Heart right ventricle (tissue), 16 donors: ENCODE measurements at regions of chr20 and their contacts with region 1.

Region 1: GRCh38 chr20:36439040-36439730 is 102.1 kb upstream of the MYL9 start:
- DNase-seq: peak; percentile 56 to 64
- ATAC-seq: peak in 7 of 8 donors; percentile 42 to 76 (median 62)
- H3K4me3 ChIP-seq: no peak overlapping the region
- H3K27ac ChIP-seq: no peak overlapping the region
- H3K4me1 ChIP-seq: peaks cover 0 to 14% (median 3%) of the 10 kb centered on the region in 9 donors
- H3K27me3 ChIP-seq: peaks cover 0 to 28% (median 21%) of the 10 kb centered on the region in 7 donors
- CTCF ChIP-seq: peak; percentile 57 to 91 (median 84)

Region 2: DNA sequence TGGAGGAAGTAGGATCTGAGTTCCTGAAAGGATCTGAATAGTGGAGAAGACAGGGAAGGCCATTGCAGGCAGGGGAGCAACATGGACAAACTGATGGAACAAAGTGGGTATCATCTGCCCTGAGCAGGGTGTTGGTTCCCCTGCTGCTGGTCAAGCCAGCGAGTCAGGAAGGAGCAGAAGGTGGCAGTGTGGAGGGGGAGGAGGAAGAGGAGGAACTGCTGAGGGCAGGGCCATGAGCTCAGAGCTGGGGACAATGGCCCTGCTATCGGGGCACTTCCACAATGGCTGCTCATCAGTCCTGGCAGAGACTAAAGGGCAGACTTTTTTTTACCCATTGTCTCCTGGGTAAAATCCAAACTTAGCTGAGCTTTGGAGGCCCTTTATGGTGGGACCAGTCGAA is 457.2 kb before region 1 on chr20:
- intact Hi-C with region 1: loop called in 1 of 10 experiments (anchors 10 kb)
- DNase-seq: no peak
- ATAC-seq: no peak
- H3K4me3 ChIP-seq: no peak overlapping the region
- H3K27ac ChIP-seq: no peak overlapping the region
- H3K4me1 ChIP-seq: peaks cover 0 to 13% (median 0%) of the 10 kb centered on the region in 9 donors
- H3K27me3 ChIP-seq: no peaks in the 10 kb centered on the region
- CTCF ChIP-seq: no peak

Region 3: DNA sequence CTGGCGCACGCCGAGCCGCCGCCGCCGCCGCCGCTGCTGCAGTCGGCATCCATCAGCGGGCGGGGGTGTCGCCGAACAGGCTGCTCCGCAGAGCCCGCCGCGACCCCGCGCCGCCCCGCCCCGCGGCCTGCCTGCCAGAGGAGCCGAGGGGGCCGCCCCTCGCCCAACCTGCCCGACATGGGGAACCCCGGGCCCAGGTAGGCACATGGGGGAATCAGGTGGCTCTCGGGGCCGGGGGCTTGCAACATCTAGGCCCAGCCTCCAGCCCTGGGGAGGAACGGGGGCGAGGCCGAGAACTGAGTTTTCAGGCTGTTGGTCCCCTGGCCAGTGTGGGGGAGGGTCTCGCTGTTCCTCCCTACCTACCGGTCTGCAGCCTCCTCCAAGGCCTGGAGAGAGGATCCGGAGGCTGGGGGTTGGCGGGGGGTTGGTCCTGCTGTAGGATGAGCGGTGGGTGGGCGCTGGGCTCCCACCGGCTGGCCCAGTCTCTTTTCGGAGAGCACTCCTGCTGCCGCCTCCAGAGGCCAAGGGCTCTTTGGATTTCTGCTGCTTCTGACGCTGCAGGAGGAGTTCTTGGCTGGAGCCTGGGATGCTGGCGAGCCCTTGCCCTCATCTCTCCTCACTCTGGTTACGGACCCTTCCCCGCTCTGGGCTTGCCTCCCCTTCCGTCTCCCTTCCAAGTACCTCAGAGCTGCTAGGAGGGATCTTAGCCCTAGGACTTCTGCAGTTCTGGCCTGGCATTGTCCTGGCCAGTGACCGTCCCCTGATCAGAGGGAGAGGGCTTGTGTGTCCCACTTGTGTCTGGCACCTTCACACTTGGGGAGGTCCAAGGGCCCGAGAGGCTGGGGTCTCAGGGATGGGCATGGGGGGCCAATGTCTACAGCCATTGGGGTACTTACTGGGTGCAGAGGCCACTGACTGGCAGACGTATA is 284.2 kb before region 1 on chr20 and contains the start of gene EPB41L1:
- intact Hi-C with region 1: loop called in 1 of 10 experiments (anchors 5 kb)
- DNase-seq: peak in 1 of 2 donors; percentile 30
- ATAC-seq: peak in 6 of 8 donors; percentile 2 to 7 (median 4)
- H3K4me3 ChIP-seq: peak within 1 kb of the TSS; percentile 43 to 75 (median 67)
- H3K27ac ChIP-seq: peak within 1 kb of the TSS; percentile 36 to 83 (median 72)
- H3K4me1 ChIP-seq: peaks cover 10 to 65% (median 25%) of the 10 kb centered on the region in 9 donors
- H3K27me3 ChIP-seq: peaks cover 0 to 22% (median 0%) of the 10 kb centered on the region in 7 donors
- CTCF ChIP-seq: no peak
- total RNA-seq, gene EPB41L1: 11.1 to 21.7 (median 16.9) TPM

Region 4: DNA sequence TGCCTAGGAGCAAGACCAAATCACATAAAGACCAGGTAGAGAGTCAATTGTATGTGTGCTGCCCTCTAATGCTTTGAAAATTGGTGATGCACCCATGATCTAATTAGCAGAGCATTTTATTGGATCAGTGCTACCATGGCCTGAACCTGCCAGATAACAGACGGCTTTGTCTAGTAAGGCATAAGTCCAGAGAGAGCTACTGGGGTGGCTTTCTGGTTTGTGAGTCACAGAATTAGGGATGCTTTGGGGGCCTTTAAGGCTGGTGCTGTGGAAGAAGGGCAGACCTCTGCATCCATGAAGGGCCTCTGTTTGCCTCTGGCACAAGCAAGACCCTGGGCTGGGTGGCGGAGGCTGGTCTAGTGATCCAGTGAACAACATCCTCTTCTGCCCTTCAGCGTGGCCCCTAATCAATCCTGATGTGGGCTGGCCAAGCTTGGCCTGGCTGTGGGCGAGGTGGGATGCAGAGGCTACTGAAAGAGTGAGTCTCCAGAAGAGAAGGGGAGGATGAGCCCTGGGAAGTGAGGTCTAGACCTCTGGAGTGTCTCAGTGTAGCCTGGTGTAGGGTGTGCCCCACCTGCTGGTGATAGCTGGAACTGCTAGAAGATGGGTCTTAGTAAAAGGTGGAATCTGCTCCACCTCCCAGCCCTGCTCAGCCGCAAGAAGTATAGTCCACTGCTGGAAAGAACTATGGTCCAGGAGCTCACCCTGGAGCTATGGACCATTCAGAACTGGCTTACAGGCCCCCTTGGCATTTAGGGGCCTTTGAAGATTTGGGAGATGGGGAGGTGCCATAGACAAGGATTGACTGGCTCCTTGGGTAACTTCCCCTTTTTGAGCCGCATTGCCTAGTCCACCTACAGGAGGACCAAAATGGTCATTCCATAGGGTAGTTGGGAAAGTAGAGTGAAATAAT is 239.6 kb before region 1 on chr20:
- intact Hi-C with region 1: loop called in 5 of 10 experiments (anchors 2 to 5 kb)
- DNase-seq: peak; percentile 65 to 81
- ATAC-seq: peak; percentile 57 to 83 (median 76)
- H3K4me3 ChIP-seq: no peak overlapping the region
- H3K27ac ChIP-seq: no peak overlapping the region
- H3K4me1 ChIP-seq: peaks cover 0 to 20% (median 0%) of the 10 kb centered on the region in 9 donors
- H3K27me3 ChIP-seq: no peaks in the 10 kb centered on the region
- CTCF ChIP-seq: peak; percentile 85 to 95 (median 92)

Region 5: DNA sequence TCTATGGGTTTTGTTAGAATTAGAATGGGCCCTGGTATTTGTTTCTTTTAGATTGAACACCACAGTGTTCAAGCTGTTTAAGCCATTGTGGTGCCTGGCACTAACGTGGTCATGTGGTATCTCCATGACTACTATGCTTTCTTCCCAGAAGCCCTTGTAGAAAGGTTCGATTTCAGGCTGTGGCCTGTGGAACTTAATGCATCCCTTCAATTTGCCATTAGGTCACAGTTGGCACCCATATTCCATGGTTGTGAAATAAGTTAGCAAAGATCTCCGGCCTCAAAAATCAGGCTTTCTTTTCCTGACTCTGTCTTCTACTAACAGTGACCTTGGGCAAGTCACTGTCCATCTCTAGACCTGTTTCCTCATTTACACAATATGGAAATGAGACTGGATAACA is 234.2 kb before region 1 on chr20:
- intact Hi-C with region 1: loop called (anchors 2 to 5 kb)
- DNase-seq: no peak
- ATAC-seq: no peak
- H3K4me3 ChIP-seq: no peak overlapping the region
- H3K27ac ChIP-seq: no peak overlapping the region
- H3K4me1 ChIP-seq: peaks cover 0 to 6% (median 0%) of the 10 kb centered on the region in 9 donors
- H3K27me3 ChIP-seq: no peaks in the 10 kb centered on the region
- CTCF ChIP-seq: no peak

Region 6: DNA sequence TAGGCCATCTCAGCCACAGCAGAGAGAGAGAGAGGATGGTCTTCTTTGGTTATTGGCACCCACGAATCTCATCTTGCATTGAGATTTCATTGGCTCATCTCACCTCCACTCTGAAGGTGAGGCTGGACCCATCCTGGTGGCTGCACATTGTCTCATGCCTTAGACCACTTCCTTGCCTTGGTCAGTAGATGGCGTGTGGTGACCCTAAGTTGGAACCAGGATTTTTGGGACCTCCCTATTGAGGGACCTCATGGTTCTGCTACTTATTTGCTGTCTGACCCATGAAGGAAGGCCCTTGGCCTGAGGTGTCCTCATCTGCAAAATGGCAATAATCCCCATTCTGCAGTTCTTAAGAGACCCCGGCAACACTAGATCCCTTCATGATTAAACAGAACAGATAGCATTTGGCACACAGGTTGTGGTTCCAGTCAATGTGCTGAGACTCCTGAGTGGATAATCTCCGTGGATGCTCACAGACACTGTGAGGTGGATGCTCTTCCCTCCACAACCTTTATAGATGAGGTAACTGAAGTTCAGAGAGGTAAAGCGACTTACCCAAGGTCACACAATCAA is 224.4 kb before region 1 on chr20:
- intact Hi-C with region 1: loop called in 7 of 10 experiments (anchors 5 kb)
- DNase-seq: no peak
- ATAC-seq: peak in 4 of 8 donors; percentile 49 to 62 (median 54)
- H3K4me3 ChIP-seq: no peak overlapping the region
- H3K27ac ChIP-seq: no peak overlapping the region
- H3K4me1 ChIP-seq: no peaks in the 10 kb centered on the region
- H3K27me3 ChIP-seq: no peaks in the 10 kb centered on the region
- CTCF ChIP-seq: peak in 8 of 9 donors; percentile 41 to 66 (median 56)

Region 7: DNA sequence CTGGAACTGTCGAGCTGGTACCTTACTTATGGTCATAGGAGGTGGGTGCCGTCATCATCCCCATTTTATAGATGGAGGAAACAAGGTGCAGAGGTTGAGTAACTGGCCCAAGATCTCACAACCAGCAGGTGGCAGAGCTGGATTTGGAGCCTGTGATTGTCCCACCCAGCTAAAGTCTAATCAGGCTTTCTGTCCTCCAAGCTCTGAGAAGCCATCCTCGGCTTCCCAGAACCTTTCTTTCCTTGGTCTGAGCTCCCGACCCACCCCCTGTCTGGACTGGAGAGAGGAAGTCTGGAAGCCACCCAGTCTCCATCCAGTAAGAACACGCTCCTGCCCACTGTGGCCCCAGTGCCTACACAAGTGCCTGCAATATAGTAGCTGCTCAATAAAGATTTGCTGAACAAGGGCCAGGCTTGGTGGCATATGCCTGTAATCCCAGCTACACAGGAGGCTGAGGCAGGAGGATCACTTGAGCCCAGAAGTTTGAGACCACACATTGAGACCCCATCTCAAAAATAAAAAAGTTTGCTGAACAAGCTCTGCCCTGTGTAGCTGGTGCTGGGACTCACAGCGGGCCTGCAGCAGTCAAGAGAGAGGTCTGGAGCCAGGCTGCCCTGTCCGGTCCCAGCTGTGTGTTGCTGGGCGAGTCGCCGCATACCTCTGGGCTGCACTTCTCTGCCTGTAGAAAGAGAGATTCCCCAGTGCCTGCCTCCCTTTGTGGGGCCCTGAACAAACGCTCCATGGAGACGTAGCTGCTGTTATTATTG is 165.6 kb before region 1 on chr20:
- intact Hi-C with region 1: loop called in 4 of 10 experiments (anchors 2 to 10 kb)
- DNase-seq: no peak
- ATAC-seq: no peak
- H3K4me3 ChIP-seq: no peak overlapping the region
- H3K27ac ChIP-seq: no peak overlapping the region
- H3K4me1 ChIP-seq: no peaks in the 10 kb centered on the region
- H3K27me3 ChIP-seq: peaks cover 0 to 40% (median 29%) of the 10 kb centered on the region in 7 donors
- CTCF ChIP-seq: peak in 5 of 9 donors; percentile 19 to 38 (median 28)

Region 8: GRCh38 chr20:36519944-36520343 is 80.8 kb after region 1 on chr20:
- intact Hi-C with region 1: no loop called
- DNase-seq: no peak
- ATAC-seq: no peak
- H3K4me3 ChIP-seq: no peak overlapping the region
- H3K27ac ChIP-seq: no peak overlapping the region
- H3K4me1 ChIP-seq: peaks cover 0 to 37% (median 15%) of the 10 kb centered on the region in 9 donors
- H3K27me3 ChIP-seq: no peaks in the 10 kb centered on the region
- CTCF ChIP-seq: no peak

Region 9: DNA sequence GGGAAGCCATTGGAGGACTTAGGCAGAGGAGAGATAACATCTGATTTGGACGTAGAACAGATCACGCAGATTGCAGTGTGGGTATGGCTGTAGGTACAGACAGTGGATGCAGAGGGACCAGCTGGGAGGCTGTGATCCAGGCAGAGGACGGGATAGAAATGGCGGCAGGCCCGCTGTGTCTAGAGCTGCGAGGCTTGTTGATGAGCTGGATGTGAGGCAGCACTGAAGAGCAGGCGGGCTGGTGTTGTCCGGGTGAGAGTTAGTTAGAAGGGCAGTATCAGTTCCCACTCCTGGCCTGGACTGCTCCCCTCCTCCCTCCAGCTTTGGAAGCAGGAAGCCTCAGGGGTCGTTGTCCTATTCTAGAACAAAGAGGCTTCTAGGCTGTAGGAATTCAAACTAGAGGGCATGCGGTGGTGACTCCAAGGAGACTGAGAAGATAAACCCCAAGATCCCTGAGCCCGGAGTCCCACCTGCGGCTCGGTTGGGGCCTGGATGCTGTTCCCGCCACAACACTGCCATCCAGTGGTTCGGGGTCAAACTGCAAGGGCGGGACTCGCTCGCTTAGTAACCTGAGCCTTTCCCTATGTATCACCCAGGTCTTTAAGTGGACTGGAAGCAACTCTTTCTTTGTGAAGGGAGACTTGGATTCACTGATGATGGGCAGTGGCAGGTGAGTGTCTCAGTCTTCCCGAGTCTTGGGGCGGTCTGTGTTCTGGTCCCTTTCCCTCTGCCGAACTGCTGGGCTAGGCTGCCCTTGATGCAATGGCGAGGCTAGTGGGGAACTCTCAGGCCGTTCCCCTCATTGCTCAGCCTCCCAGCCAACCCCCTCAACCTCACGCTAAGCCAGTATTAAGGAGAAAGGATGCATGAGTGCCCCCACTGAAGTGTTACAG is 447.9 kb after region 1 on chr20:
- intact Hi-C with region 1: no loop called
- DNase-seq: peak; percentile 83 to 84
- ATAC-seq: peak; percentile 72 to 91 (median 87)
- H3K4me3 ChIP-seq: peak overlapping the region in 1 of 10 donors; percentile 4
- H3K27ac ChIP-seq: peak overlapping the region in 2 of 10 donors; percentile 15 to 30
- H3K4me1 ChIP-seq: peaks cover 0 to 13% (median 11%) of the 10 kb centered on the region in 9 donors
- H3K27me3 ChIP-seq: no peaks in the 10 kb centered on the region
- CTCF ChIP-seq: peak; percentile 83 to 98 (median 96)